ENCODE measurements at regions of chr4 and their contacts with region 1.

Region 1: GRCh38 chr4:163332500-163333406 is at the start of gene NPY1R:
- DNase-seq: peak; percentile 51 to 89
- H3K4me3 ChIP-seq: peak within 1 kb of the TSS; percentile 42
- CTCF ChIP-seq: no peak
- POLR2A ChIP-seq: no peak
- total RNA-seq, gene NPY1R: 12.1 to 31.5 (median 19.8) TPM

Region 2: DNA sequence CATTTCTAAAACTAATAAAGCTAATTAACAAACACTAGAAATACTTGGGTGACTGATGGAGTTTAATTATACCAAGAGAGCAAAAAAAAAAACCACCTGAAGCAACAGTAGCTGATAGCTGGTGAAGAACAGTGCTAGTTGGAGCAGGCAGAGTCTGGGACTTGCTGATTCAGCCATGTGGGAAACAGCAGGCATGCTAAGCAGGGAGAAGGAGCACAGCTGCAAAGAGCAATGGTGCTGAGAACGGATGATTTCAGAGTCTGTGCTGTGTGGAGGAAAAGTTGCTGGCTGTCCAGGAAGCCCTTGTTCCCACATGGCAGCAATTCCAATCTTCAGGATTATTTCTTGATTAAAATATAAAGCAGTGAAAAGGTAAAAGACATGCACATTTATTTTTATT is 69.1 kb before region 1 on chr4:
- intact Hi-C with region 1: loop called (anchors 2 kb)
- DNase-seq: no peak
- H3K4me3 ChIP-seq: no peak overlapping the region
- CTCF ChIP-seq: no peak
- POLR2A ChIP-seq: no peak